OCI-LY7 (cell line): ENCODE measurements at regions of chr4 and their contacts with region 1.

Region 1: GRCh38 chr4:144174401-144175067 is 34.0 kb upstream of the GYPA start:
- DNase-seq: peak; percentile 54
- H3K4me3 ChIP-seq: no peak overlapping the region
- H3K27ac ChIP-seq: no peak overlapping the region
- H3K4me1 ChIP-seq: no peaks in the 10 kb centered on the region
- CTCF ChIP-seq: peak; percentile 81

Region 2: GRCh38 chr4:144399927-144400326 is 225.4 kb after region 1 on chr4:
- CTCF ChIA-PET with region 1: no interaction called
- POLR2A ChIA-PET with region 1: no interaction called
- intact Hi-C with region 1: no loop called
- DNase-seq: no peak
- H3K4me3 ChIP-seq: no peak overlapping the region
- H3K27ac ChIP-seq: no peak overlapping the region
- H3K4me1 ChIP-seq: no peaks in the 10 kb centered on the region
- CTCF ChIP-seq: no peak

Region 3: GRCh38 chr4:144575181-144575580 is 400.6 kb after region 1 on chr4:
- CTCF ChIA-PET with region 1: no interaction called
- POLR2A ChIA-PET with region 1: no interaction called
- intact Hi-C with region 1: loop called (anchors 10 kb)
- DNase-seq: no peak
- H3K4me3 ChIP-seq: no peak overlapping the region
- H3K27ac ChIP-seq: no peak overlapping the region
- H3K4me1 ChIP-seq: no peaks in the 10 kb centered on the region
- CTCF ChIP-seq: no peak

Region 4: DNA sequence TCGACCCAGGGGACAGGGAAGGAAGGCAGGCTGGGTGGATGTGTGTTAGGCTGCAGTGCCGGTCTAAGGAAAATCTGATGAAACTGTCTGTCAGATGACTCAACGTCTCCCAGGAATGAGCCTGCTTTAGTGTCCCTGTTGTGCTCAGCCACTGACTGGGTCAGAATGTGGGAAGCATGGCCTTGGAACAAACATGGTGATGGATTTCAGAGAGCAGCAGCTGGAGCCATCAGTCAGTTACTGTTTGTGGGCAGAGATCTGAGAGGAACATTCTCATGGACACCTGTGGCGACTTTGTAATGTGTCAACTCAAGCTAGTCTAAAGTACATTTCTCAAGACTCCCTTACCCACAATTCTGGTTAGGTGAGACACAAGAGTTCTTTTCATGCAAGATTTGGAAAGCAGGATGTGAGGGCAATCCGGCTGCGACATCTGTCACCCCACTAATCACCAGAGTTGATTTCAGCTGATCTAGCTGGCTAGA is 860.2 kb after region 1 on chr4:
- CTCF ChIA-PET with region 1: no interaction called
- POLR2A ChIA-PET with region 1: no interaction called
- intact Hi-C with region 1: loop called (anchors 10 kb)
- DNase-seq: no peak
- H3K4me3 ChIP-seq: no peak overlapping the region
- H3K27ac ChIP-seq: no peak overlapping the region
- H3K4me1 ChIP-seq: peaks cover 6% of the 10 kb centered on the region
- CTCF ChIP-seq: no peak